Activated CD8-positive, alpha-beta T cell treated with anti-CD3 and anti-CD28 coated beads for 36 hours (primary cell): ENCODE measurements at regions of chr4 and their contacts with region 1.

Region 1: GRCh38 chr4:138680989-138681604 is 334.5 kb upstream of the NOCT start:
- DNase-seq: peak; percentile 81
- ATAC-seq: peak; percentile 47
- H3K4me3 Mint-ChIP-seq: no peak overlapping the region
- H3K27ac Mint-ChIP-seq: no peak overlapping the region
- H3K4me1 Mint-ChIP-seq: no peaks in the 10 kb centered on the region
- H3K27me3 Mint-ChIP-seq: peaks cover 8% of the 10 kb centered on the region
- CTCF ChIP-seq: peak; percentile 92

Region 2: GRCh38 chr4:138666366-138666765 is 14.7 kb before region 1 on chr4:
- CTCF ChIA-PET with region 1: interaction called, 11 read pairs
- POLR2A ChIA-PET with region 1: no interaction called
- intact Hi-C with region 1: no loop called
- DNase-seq: no peak
- ATAC-seq: no peak
- H3K4me3 Mint-ChIP-seq: no peak overlapping the region
- H3K27ac Mint-ChIP-seq: no peak overlapping the region
- H3K4me1 Mint-ChIP-seq: no peaks in the 10 kb centered on the region
- H3K27me3 Mint-ChIP-seq: peaks cover 1% of the 10 kb centered on the region
- CTCF ChIP-seq: no peak